BJ (cell line): ENCODE measurements at regions of chr19 and their contacts with region 1.

Region 1: GRCh38 chr19:49097455-49098288 is 12.4 kb downstream of the SNRNP70 start:
- DNase-seq: no peak
- H3K4me3 ChIP-seq: no peak overlapping the region
- H3K27me3 ChIP-seq: no peaks in the 10 kb centered on the region
- CTCF ChIP-seq: peak; percentile 99

Region 2: DNA sequence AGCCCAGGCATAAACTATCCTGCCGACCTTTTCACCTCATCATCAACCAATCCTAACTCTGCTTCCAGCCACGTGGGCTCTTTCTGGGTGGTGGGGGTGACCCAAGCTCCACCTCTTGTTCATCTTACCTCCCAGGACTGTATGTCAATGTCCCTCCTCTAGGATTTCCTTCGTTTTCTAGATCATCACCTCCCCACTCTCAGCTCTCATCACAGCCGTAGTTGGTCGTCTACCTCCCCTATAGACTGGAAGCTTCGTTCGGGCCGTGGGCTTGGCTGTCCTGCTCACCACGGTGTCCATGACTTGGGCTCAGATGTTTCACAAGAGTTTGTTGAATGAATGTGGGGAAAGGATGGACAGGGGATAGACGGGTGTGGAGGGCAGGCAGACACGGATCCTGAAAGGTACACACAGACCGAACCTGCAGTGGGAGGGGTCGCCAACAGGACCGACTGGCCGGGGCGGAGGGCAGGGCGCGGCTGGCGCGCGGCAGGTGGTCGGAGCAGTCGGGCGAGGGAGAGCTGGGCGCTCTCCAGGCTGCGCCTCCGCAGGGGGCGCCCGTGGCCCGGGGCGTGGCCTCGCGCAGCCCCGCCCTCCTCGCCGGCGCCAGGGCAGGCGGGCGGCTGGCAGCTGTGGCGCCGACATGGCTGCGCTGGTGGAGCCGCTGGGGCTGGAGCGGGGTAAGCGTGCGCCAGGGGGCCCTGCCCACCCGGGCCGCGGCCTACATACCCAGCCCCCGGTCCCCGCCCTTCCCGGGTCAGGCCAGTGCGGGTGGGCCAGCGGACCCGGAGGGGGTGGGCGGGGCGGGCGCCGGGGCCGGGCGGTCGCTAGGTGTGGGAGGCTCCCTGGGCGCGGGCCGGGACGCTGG is 16.3 kb after region 1 on chr19 and contains the start of gene LIN7B:
- CTCF ChIA-PET with region 1: interaction called, 34 read pairs
- POLR2A ChIA-PET with region 1: interaction called, 4 read pairs
- DNase-seq: no peak
- H3K4me3 ChIP-seq: peak within 1 kb of the TSS; percentile 90
- H3K27me3 ChIP-seq: no peaks in the 10 kb centered on the region
- CTCF ChIP-seq: peak; percentile 19; the same call in 1 of the 2 replicates
- polyA plus RNA-seq, gene LIN7B: 6.7 and 9.4 TPM in 2 replicates

Region 3: DNA sequence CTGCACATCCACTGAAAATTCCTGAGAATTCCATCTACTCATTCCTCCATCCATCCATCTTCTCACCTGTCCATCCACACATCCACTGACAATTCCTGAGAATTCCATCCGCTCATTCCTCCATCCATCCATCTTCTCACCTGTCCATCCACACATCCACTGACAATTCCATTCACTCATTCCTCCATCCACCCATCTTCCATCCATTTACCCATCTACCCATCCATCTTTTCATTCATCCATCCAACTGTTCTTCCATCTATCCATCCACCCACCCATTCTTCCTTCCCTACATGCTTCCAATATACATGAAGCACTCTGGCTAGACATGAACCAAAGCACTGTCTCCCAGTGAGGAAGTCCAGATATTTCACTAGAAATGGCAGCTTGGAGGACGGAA is 75.5 kb after region 1 on chr19:
- CTCF ChIA-PET with region 1: interaction called, 3 read pairs
- POLR2A ChIA-PET with region 1: interaction called, 11 read pairs
- DNase-seq: no peak
- H3K4me3 ChIP-seq: no peak overlapping the region
- H3K27me3 ChIP-seq: no peaks in the 10 kb centered on the region
- CTCF ChIP-seq: no peak

Region 4: DNA sequence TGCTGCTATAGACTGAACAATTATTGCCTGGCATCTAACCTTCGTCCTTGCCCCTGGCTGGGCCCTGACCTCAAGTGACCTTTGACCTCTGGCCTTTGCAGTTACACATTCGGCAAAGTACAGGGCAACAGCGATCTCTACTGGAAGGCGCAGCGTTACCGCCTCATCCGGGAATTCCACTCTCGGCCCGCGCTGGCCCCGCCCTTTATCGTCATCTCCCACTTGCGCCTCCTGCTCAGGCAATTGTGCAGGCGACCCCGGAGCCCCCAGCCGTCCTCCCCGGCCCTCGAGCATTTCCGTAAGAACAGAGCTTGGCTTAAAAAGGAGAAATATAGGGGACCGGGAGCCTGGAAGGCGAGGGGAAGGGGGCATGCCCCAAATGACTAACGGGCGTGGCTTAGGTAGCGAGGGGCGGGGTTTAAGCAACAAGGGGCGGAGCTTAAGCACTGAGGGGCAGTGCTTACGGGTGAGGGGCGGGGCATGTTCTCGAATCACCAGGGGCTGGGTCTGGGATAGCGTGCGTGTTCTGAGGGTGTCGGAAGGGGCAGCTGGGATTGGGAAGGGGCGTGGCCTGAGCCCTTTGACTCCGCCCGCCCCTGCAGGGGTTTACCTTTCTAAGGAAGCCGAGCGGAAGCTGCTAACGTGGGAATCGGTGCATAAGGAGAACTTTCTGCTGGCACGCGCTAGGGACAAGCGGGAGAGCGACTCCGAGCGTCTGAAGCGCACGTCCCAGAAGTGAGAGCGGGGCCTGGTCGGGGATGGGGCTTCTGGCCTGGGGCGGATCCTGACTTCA is 112.6 kb after region 1 on chr19:
- CTCF ChIA-PET with region 1: interaction called, 39 read pairs
- POLR2A ChIA-PET with region 1: no interaction called
- DNase-seq: no peak
- H3K4me3 ChIP-seq: no peak overlapping the region
- H3K27me3 ChIP-seq: no peaks in the 10 kb centered on the region
- CTCF ChIP-seq: no peak